ENCODE measurements at regions of chr7 and their contacts with region 1.

Region 1: GRCh38 chr7:123367484-123368122 is 166.8 kb downstream of the IQUB start:
- DNase-seq: peak; percentile 21
- ATAC-seq: peak; percentile 95
- H3K4me3 Mint-ChIP-seq: no peak overlapping the region
- H3K27ac Mint-ChIP-seq: no peak overlapping the region
- H3K4me1 Mint-ChIP-seq: no peaks in the 10 kb centered on the region; the same call in 1 of the 2 replicates
- H3K27me3 Mint-ChIP-seq: no peaks in the 10 kb centered on the region
- CTCF ChIP-seq: peak; percentile 74

Region 2: DNA sequence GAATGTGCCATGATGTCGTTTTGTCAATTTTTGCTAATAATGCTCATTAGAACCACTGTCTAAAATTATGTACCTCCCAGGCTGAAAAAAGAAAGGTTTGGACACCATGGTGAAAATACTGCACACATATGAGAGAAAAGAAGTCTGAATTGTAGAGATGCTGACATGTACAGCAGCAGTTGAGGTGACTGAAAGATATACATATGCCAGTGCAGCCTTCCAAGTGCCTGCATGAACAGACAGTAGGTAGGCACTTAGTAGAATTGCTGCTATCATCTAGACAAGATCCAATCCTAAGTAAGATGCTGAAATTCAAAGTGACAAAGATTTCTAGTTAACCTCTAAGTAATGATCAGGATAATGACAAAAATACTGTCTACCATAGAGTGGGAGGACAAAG is 254.8 kb before region 1 on chr7:
- CTCF ChIA-PET with region 1: no interaction called
- POLR2A ChIA-PET with region 1: no interaction called
- DNase-seq: no peak
- ATAC-seq: no peak
- H3K4me3 Mint-ChIP-seq: no peak overlapping the region
- H3K27ac Mint-ChIP-seq: no peak overlapping the region
- H3K4me1 Mint-ChIP-seq: peaks cover 14% of the 10 kb centered on the region
- H3K27me3 Mint-ChIP-seq: no peaks in the 10 kb centered on the region
- CTCF ChIP-seq: no peak

Region 3: GRCh38 chr7:123154231-123154860 is 213.3 kb before region 1 on chr7:
- CTCF ChIA-PET with region 1: interaction called, 13 read pairs
- POLR2A ChIA-PET with region 1: no interaction called
- DNase-seq: peak; percentile 77
- ATAC-seq: peak; percentile 83
- H3K4me3 Mint-ChIP-seq: no peak overlapping the region
- H3K27ac Mint-ChIP-seq: no peak overlapping the region
- H3K4me1 Mint-ChIP-seq: no peaks in the 10 kb centered on the region
- H3K27me3 Mint-ChIP-seq: no peaks in the 10 kb centered on the region
- CTCF ChIP-seq: peak; percentile 75

Region 4: DNA sequence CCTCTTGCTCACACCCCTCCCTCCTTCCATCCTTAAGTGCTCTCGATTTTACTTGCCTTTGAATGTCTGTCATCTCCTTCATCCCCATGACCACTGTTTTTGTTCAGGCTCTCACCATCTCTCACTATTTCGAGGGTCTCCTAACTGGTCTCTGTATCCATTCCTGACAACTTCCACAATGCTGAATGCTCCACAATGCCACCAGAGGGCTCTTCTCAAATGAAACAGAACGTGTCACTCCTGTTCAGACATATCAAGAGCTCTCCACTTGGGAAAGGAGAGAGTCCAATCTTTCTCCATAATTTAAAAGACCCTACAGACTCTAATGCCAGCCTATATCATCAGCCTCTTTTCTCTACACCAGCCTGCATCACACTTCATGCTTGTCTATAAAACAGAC is 158.8 kb before region 1 on chr7:
- CTCF ChIA-PET with region 1: interaction called, 17 read pairs
- POLR2A ChIA-PET with region 1: no interaction called
- DNase-seq: no peak
- ATAC-seq: peak; percentile 83
- H3K4me3 Mint-ChIP-seq: no peak overlapping the region
- H3K27ac Mint-ChIP-seq: no peak overlapping the region; the same call in 1 of the 2 replicates
- H3K4me1 Mint-ChIP-seq: peaks cover 29% of the 10 kb centered on the region
- H3K27me3 Mint-ChIP-seq: no peaks in the 10 kb centered on the region; the same call in 1 of the 2 replicates
- CTCF ChIP-seq: no peak

Region 5: GRCh38 chr7:123260428-123260960 is 107.1 kb before region 1 on chr7:
- CTCF ChIA-PET with region 1: no interaction called
- POLR2A ChIA-PET with region 1: no interaction called
- DNase-seq: no peak
- ATAC-seq: no peak
- H3K4me3 Mint-ChIP-seq: no peak overlapping the region
- H3K27ac Mint-ChIP-seq: no peak overlapping the region
- H3K4me1 Mint-ChIP-seq: peaks cover 14% of the 10 kb centered on the region
- H3K27me3 Mint-ChIP-seq: no peaks in the 10 kb centered on the region; the same call in 1 of the 2 replicates
- CTCF ChIP-seq: no peak

Region 6: DNA sequence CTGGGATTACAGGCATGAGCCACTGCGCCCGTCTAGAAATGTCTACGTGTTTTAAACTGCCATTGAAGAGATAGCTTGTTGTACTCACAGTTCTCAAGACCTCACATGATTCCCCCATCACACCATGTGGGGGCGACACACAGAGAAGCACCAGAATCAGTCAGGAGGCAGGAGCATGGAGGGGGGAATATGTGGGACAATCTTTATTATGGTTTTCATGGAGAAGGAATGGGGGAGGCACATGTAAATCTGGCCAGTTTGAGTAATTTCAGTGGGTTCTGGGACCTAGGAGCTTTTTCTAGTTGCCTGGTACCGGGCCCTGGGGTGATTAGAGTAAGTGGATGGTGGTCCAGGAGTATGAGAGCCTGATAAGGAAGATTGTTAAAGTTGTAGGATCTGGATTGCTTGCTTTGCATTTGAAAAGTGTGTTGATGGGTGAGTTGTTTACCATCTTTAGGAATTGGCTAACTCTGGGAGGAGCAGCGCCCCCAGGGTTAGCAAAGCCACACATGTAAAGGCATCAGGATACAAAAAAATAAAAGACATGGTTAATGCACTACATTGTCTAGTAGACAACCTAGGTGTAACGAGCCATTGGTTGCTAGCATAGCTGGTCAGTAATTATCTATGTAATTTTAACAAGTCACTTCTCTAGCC is 82.4 kb before region 1 on chr7:
- CTCF ChIA-PET with region 1: interaction called, 20 read pairs
- POLR2A ChIA-PET with region 1: no interaction called
- DNase-seq: peak; percentile 53
- ATAC-seq: peak; percentile 95
- H3K4me3 Mint-ChIP-seq: peak overlapping the region; percentile 16; the same call in 1 of the 2 replicates
- H3K27ac Mint-ChIP-seq: peak overlapping the region; percentile 38; the same call in 1 of the 2 replicates
- H3K4me1 Mint-ChIP-seq: peaks cover 19% of the 10 kb centered on the region
- H3K27me3 Mint-ChIP-seq: peaks cover 43% of the 10 kb centered on the region
- CTCF ChIP-seq: peak; percentile 25; the same call in 1 of the 2 replicates

Measured in WTC11 (cell line).